Activated CD8-positive, alpha-beta T cell treated with anti-CD3 and anti-CD28 coated beads for 36 hours (primary cell): ENCODE measurements at regions of chr16 and their contacts with region 1.

Region 1: GRCh38 chr16:11386791-11387546 is 41.7 kb downstream of the RMI2 start:
- DNase-seq: no peak
- ATAC-seq: peak; percentile 49
- H3K4me3 Mint-ChIP-seq: no peak overlapping the region
- H3K27ac Mint-ChIP-seq: no peak overlapping the region
- H3K4me1 Mint-ChIP-seq: no peaks in the 10 kb centered on the region
- H3K27me3 Mint-ChIP-seq: no peaks in the 10 kb centered on the region
- CTCF ChIP-seq: no peak

Region 2: GRCh38 chr16:11370084-11370931 is 16.7 kb before region 1 on chr16:
- CTCF ChIA-PET with region 1: interaction called, 33 read pairs
- POLR2A ChIA-PET with region 1: no interaction called
- intact Hi-C with region 1: no loop called
- DNase-seq: no peak
- ATAC-seq: peak; percentile 24
- H3K4me3 Mint-ChIP-seq: no peak overlapping the region
- H3K27ac Mint-ChIP-seq: no peak overlapping the region
- H3K4me1 Mint-ChIP-seq: peaks cover 8% of the 10 kb centered on the region
- H3K27me3 Mint-ChIP-seq: no peaks in the 10 kb centered on the region
- CTCF ChIP-seq: no peak

Region 3: DNA sequence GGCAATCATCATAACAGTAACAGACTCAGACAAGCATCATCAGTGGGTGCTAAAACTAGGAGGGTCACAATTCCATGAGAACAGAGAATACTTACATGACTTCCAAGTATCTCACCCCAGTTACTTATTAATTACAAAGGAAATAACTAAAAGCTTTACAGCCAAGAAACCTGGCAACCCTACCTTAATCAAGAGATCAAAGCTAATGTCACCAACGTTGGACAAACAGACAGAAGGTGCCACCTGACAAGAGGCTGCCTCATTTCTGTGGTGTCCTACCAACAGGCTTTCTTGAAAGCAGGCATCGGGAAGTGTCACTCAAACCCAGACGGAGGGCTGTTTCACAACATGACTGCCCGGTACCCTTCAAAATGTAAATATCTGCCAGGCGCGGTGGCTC is 42.9 kb after region 1 on chr16:
- CTCF ChIA-PET with region 1: no interaction called
- POLR2A ChIA-PET with region 1: no interaction called
- intact Hi-C with region 1: no loop called
- DNase-seq: no peak
- ATAC-seq: no peak
- H3K4me3 Mint-ChIP-seq: no peak overlapping the region
- H3K27ac Mint-ChIP-seq: no peak overlapping the region
- H3K4me1 Mint-ChIP-seq: no peaks in the 10 kb centered on the region
- H3K27me3 Mint-ChIP-seq: no peaks in the 10 kb centered on the region
- CTCF ChIP-seq: no peak